Spleen (tissue), 13 donors: ENCODE measurements at regions of chr18 and their contacts with region 1.

Region 1: GRCh38 chr18:21191596-21192307 is 50.3 kb upstream of the GREB1L start:
- DNase-seq: no peak
- H3K4me3 ChIP-seq: no peak overlapping the region
- H3K27ac ChIP-seq: no peak overlapping the region
- H3K4me1 ChIP-seq: peaks cover 0 to 3% (median 0%) of the 10 kb centered on the region in 6 donors
- H3K27me3 ChIP-seq: peaks cover 0 to 11% (median 0%) of the 10 kb centered on the region in 7 donors
- CTCF ChIP-seq: peak in 4 of 11 experiments; percentile 10 to 31 (median 18)
- POLR2A ChIP-seq: no peak

Region 2: DNA sequence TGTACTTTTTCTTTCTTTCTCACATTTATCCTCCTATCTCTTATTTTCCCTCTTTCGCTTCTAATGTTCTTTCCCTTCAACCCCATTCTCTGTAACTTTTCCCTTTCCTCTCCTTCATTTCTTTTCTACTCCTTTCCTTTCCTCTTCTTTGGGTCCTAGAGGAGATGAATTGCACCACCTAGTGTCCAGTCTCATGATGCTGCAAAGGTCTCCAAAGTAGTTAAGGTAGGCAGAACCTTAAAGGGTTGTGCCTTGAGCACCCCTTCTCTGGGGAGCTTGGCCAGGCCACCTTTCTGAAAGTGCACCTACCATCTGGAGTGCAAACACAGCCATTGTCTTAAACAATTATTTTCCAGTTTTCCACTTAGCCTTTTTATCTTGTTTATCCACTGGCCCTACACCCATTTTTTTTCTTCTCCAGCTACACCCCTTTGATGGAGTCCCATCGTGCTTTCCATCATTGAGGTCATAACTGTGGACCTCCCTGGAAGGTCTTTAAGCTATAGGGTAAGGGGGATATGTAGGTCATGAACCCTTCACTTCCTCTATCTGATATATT is 252.8 kb after region 1 on chr18:
- intact Hi-C with region 1: loop called (anchors 5 kb)
- DNase-seq: no peak
- H3K4me3 ChIP-seq: no peak overlapping the region
- H3K27ac ChIP-seq: no peak overlapping the region
- H3K4me1 ChIP-seq: no peaks in the 10 kb centered on the region
- H3K27me3 ChIP-seq: peaks cover 0 to 5% (median 0%) of the 10 kb centered on the region in 7 donors
- CTCF ChIP-seq: peak in 9 of 11 experiments; percentile 9 to 65 (median 42)
- POLR2A ChIP-seq: no peak